Activated CD8-positive, alpha-beta T cell treated with anti-CD3 and anti-CD28 coated beads, Interleukin-2, amount 10 ng/mL, durations not matched to agents 7 days and 5 days (primary cell): ENCODE measurements at regions of chr2 and their contacts with region 1.

Region 1: GRCh38 chr2:161586517-161587167 is 37.6 kb upstream of the SLC4A10 start:
- DNase-seq: no peak
- ATAC-seq: peak; percentile 44
- H3K4me3 Mint-ChIP-seq: no peak overlapping the region
- H3K27ac Mint-ChIP-seq: no peak overlapping the region
- H3K4me1 Mint-ChIP-seq: no peaks in the 10 kb centered on the region
- H3K27me3 Mint-ChIP-seq: peaks cover 20% of the 10 kb centered on the region

Region 2: DNA sequence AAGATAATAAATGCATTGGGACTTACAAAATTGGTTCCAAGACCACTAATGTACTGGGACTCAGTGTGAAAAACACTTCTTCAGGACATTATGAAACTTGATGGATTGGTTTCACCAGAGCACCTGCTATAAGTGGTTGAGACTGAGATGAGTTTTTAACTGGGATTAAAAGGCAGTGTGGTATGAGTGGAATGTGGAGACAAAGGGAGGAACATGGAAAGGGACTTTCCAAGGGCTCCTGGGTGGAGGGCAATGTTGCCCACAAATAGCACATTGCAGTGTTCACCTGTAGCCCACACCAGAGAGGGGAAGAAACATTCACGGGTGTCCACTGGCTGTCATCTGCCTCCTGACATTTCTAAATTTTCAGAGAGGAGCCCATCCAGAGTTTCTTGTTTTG is 679.8 kb before region 1 on chr2:
- CTCF ChIA-PET with region 1: no interaction called
- POLR2A ChIA-PET with region 1: no interaction called
- DNase-seq: no peak
- ATAC-seq: no peak
- H3K4me3 Mint-ChIP-seq: no peak overlapping the region
- H3K27ac Mint-ChIP-seq: no peak overlapping the region
- H3K4me1 Mint-ChIP-seq: peaks cover 3% of the 10 kb centered on the region
- H3K27me3 Mint-ChIP-seq: peaks cover 2% of the 10 kb centered on the region

Region 3: GRCh38 chr2:161576421-161576820 is 10.2 kb before region 1 on chr2:
- CTCF ChIA-PET with region 1: interaction called, 12 read pairs
- POLR2A ChIA-PET with region 1: no interaction called
- DNase-seq: no peak
- ATAC-seq: no peak
- H3K4me3 Mint-ChIP-seq: no peak overlapping the region
- H3K27ac Mint-ChIP-seq: no peak overlapping the region
- H3K4me1 Mint-ChIP-seq: peaks cover 3% of the 10 kb centered on the region
- H3K27me3 Mint-ChIP-seq: peaks cover 4% of the 10 kb centered on the region

Region 4: GRCh38 chr2:161599842-161600241 is 13.2 kb after region 1 on chr2:
- CTCF ChIA-PET with region 1: interaction called, 14 read pairs
- POLR2A ChIA-PET with region 1: no interaction called
- DNase-seq: no peak
- ATAC-seq: no peak
- H3K4me3 Mint-ChIP-seq: no peak overlapping the region
- H3K27ac Mint-ChIP-seq: no peak overlapping the region
- H3K4me1 Mint-ChIP-seq: peaks cover 8% of the 10 kb centered on the region
- H3K27me3 Mint-ChIP-seq: peaks cover 44% of the 10 kb centered on the region

Region 5: GRCh38 chr2:161946489-161947107 is 360.0 kb after region 1 on chr2:
- CTCF ChIA-PET with region 1: interaction called, 85 read pairs
- POLR2A ChIA-PET with region 1: no interaction called
- DNase-seq: peak; percentile 51
- ATAC-seq: peak; percentile 61
- H3K4me3 Mint-ChIP-seq: no peak overlapping the region
- H3K27ac Mint-ChIP-seq: no peak overlapping the region
- H3K4me1 Mint-ChIP-seq: peaks cover 36% of the 10 kb centered on the region
- H3K27me3 Mint-ChIP-seq: peaks cover 4% of the 10 kb centered on the region

Region 6: GRCh38 chr2:162123806-162124758 is 537.4 kb after region 1 on chr2:
- CTCF ChIA-PET with region 1: interaction called, 58 read pairs
- POLR2A ChIA-PET with region 1: interaction called, 3 read pairs
- DNase-seq: no peak
- ATAC-seq: peak; percentile 68
- H3K4me3 Mint-ChIP-seq: no peak overlapping the region
- H3K27ac Mint-ChIP-seq: no peak overlapping the region
- H3K4me1 Mint-ChIP-seq: peaks cover 26% of the 10 kb centered on the region
- H3K27me3 Mint-ChIP-seq: peaks cover 4% of the 10 kb centered on the region

Region 7: DNA sequence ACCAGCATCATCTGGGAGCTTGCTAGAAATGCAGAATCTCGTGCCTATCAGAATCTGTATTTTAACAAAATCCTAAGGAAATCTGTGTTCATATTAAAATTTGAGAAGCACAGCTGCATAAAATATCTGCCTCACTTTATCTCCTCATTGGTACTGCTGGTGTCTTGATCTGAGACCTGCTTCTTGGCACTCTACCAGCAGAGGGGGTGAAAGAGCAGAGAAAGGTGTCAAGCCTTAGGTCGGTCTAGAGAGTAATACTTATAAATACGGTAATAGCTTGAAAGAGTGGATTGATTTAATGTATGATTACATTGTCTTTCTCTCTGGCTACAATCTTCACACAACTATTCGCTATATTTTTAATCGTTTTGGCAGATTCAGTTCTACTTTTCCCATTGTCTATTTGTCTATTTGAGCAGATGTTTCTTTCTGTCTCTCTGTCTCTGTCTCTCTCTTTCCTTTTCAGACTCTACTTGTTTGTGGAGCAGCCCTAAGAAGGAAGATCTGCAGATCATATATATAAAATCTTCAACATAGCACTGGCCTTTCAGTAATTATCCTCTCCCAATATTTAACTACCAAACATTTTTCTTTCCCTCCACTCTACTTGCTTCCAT is 567.1 kb after region 1 on chr2:
- CTCF ChIA-PET with region 1: interaction called, 11 read pairs
- POLR2A ChIA-PET with region 1: no interaction called
- DNase-seq: peak; percentile 76
- ATAC-seq: peak; percentile 92
- H3K4me3 Mint-ChIP-seq: no peak overlapping the region
- H3K27ac Mint-ChIP-seq: no peak overlapping the region
- H3K4me1 Mint-ChIP-seq: peaks cover 2% of the 10 kb centered on the region
- H3K27me3 Mint-ChIP-seq: peaks cover 36% of the 10 kb centered on the region